HepG2 (cell line): ENCODE measurements at regions of chr11 and their contacts with region 1.

Region 1: DNA sequence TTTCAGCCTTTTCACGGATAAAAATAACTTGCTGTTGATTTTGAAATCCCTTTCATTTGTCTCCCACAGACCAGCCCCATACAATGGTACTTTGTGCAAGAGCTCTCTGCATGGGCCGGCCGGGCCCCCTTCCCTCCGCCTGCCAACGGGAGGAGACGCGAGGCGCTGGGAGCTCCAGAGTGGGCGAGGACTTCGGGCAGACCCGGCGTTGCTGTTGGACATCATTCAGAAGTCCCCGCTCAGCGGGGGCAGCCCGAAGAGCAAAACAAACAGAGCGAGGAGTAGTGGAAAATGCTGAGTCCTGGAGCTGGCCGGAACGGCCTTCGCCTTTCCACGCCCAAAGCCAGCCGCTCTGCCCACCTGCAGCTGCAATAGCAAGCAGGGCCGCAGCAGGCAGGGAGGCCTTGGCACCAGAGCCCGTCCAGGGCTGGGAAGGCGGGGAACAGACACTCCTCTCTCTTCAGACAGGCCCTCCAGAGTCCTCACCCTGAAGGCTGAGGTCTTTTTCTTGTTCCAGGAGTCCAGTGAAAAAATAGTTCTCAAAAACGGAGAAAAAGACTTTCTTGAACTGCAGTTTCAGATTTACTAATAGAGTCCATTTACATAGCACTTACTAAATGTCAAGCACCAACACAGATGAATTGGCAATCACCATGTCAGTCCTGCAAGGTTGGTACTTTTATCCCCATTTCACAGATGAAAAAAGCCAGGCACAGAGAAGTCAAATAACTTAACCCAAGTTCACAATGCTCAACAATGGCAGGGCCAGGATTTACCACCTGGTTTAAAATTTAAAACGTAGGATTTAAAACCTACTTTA is 135.5 kb downstream of the ETS1 start:
- DNase-seq: peak; percentile 82
- ATAC-seq: peak; percentile 90
- H3K4me3 ChIP-seq: peak overlapping the region in 2 of 3 experiments; percentile 8 to 44; a peak in 3 of 6 replicates
- H3K27ac ChIP-seq: peak overlapping the region; percentile 31
- H3K4me1 ChIP-seq: peaks cover 42% of the 10 kb centered on the region
- H3K27me3 ChIP-seq: no peaks in the 10 kb centered on the region
- CTCF ChIP-seq: no peak; the same call in 1 of the 2 replicates
- EP300 ChIP-seq: no peak
- POLR2A ChIP-seq: no peak
- RAD21 ChIP-seq: no peak

Region 2: DNA sequence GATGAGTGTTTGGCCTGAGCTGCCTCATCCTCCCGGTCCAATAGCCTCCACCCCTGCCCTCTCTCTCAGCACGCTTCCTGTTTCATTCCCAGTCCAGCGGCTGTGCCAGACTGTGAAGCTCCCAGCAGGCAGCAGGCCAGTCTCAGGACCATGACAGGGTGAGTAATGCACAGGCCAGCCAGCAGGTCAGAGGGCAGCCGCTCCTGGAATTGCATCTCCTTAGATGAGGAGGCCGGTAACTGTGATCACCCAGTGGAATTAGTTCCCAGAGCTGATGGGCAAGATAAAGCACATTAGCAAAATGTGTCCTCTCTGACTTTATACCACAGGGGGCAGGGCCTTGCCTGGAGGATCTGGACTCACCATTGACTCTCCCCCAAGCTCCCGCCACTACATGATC is 115.7 kb before region 1 on chr11:
- CTCF ChIA-PET with region 1: no interaction called
- POLR2A ChIA-PET with region 1: interaction called, 10 read pairs
- in situ Hi-C with region 1: no loop called
- intact Hi-C with region 1: loop called (anchors 1 kb)
- DNase-seq: peak; percentile 44
- ATAC-seq: peak; percentile 62
- H3K4me3 ChIP-seq: no peak overlapping the region
- H3K27ac ChIP-seq: no peak overlapping the region
- H3K4me1 ChIP-seq: peaks cover 31% of the 10 kb centered on the region
- H3K27me3 ChIP-seq: no peaks in the 10 kb centered on the region
- CTCF ChIP-seq: no peak
- EP300 ChIP-seq: no peak
- POLR2A ChIP-seq: no peak
- RAD21 ChIP-seq: no peak

Region 3: DNA sequence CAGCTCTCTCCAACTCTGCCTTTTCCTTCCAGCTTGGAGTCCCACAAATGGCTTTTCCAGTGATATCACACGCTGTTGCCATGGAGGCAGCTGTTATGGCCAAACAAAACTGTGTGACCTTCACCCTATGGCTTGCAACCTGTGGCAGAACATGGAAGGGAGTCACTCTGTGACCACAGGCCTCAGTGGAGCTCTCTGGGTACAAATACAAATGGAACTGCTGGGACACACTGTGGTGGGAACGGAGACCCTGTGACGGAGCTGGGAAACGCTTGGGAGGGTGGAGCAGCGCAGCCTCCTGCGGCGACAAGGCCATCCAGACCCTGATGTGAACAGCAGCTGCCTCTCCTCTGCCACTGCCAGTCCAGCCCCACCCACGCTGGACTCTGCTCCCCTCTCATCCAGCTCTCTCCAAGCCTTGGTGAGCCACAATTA is 27.0 kb before region 1 on chr11:
- CTCF ChIA-PET with region 1: no interaction called
- POLR2A ChIA-PET with region 1: interaction called, 13 read pairs
- in situ Hi-C with region 1: no loop called
- intact Hi-C with region 1: loop called (anchors 2 kb)
- DNase-seq: peak; percentile 84
- ATAC-seq: peak; percentile 98
- H3K4me3 ChIP-seq: peak overlapping the region; percentile 17 to 56 (median 28); a peak in 5 of 6 replicates
- H3K27ac ChIP-seq: peak overlapping the region; percentile 73
- H3K4me1 ChIP-seq: peaks cover 20% of the 10 kb centered on the region
- H3K27me3 ChIP-seq: no peaks in the 10 kb centered on the region
- CTCF ChIP-seq: no peak
- EP300 ChIP-seq: peak in 1 of 2 experiments; percentile 41; a peak in 2 of 4 replicates
- POLR2A ChIP-seq: 0 out of 4 replicates have a peak, but pooled peaks of 1 of the 2 experiments have one; percentile 39
- RAD21 ChIP-seq: no peak

Region 4: GRCh38 chr11:128467610-128468041 is 15.8 kb after region 1 on chr11:
- CTCF ChIA-PET with region 1: no interaction called
- POLR2A ChIA-PET with region 1: interaction called, 7 read pairs
- in situ Hi-C with region 1: no loop called
- intact Hi-C with region 1: loop called (anchors 1 kb)
- DNase-seq: peak; percentile 74
- ATAC-seq: peak; percentile 71
- H3K4me3 ChIP-seq: no peak overlapping the region
- H3K27ac ChIP-seq: no peak overlapping the region
- H3K4me1 ChIP-seq: peaks cover 18% of the 10 kb centered on the region
- H3K27me3 ChIP-seq: no peaks in the 10 kb centered on the region; a peak in 1 of 5 replicates
- CTCF ChIP-seq: no peak
- EP300 ChIP-seq: peak in 1 of 2 experiments; percentile 43; a peak in 1 of 4 replicates
- POLR2A ChIP-seq: no peak
- RAD21 ChIP-seq: no peak

Region 5: DNA sequence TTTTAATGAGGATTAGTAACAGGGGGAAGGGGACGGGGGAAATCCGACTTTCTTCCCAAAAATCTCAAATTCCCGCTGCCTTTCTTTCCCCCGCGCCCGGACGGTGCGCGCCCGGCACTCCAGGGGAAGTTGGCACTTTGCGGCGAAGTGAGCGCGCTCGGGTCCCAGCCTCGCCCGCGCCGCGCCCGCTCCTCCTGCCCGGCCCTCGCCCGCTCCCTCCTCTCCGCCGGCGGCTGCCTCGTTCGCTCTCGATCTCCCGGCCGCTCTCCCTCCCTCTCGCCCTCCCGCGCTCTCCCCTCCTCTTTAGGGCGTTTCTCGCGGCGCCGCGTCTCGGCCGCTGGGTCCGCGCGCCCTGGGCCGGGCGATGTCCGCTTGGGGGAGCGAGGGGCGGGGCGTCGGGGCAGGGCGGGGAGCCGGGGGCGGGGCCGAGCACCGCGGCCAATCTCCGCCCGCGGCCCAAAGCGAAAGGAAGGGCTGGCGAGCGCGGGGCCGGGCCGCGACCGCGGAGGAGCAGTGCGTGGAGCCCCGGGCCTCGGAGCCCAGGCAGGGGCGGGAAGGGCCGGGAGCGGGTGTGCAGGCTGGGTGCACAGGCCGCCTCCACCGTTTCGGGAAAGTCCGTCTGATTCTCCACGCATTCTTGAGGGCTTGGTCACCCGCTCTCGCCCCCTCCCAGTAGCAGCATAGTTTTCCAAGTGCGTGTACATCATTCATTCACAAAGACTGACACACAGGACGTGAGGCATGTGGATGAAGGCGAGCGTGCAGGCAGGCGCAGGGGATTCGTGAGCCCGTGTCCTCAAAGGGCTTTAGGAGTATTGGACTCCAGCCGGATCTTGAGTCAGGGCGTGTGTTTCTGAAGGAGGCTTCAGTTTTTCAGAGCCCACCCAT is 70.4 kb after region 1 on chr11:
- CTCF ChIA-PET with region 1: no interaction called
- POLR2A ChIA-PET with region 1: no interaction called
- in situ Hi-C with region 1: no loop called
- intact Hi-C with region 1: loop called (anchors 2 kb)
- DNase-seq: peak; percentile 39
- ATAC-seq: peak; percentile 97
- H3K4me3 ChIP-seq: peak overlapping the region; percentile 58 to 74 (median 58)
- H3K27ac ChIP-seq: no peak overlapping the region
- H3K4me1 ChIP-seq: peaks cover 8% of the 10 kb centered on the region
- H3K27me3 ChIP-seq: peaks cover 0 to 8% of the 10 kb centered on the region in 2 experiments; a peak in 4 of 5 replicates
- CTCF ChIP-seq: no peak
- EP300 ChIP-seq: no peak
- POLR2A ChIP-seq: peak; percentile 33 to 61; a peak in 3 of 4 replicates
- RAD21 ChIP-seq: no peak